GM12878 (cell line): ENCODE measurements at regions of chr2 and their contacts with region 1.

Region 1: GRCh38 chr2:233976690-233977294 is 59.6 kb downstream of the TRPM8 start:
- DNase-seq: peak; percentile 9
- ATAC-seq: peak; percentile 79
- H3K4me3 ChIP-seq: no peak overlapping the region
- H3K27ac ChIP-seq: no peak overlapping the region
- H3K4me1 ChIP-seq: no peaks in the 10 kb centered on the region
- H3K27me3 ChIP-seq: no peaks in the 10 kb centered on the region; a peak in 1 of 4 replicates
- CTCF ChIP-seq: peak; percentile 37 to 58 (median 37); a peak in 5 of 6 replicates
- EP300 ChIP-seq: no peak
- POLR2A ChIP-seq: no peak
- RAD21 ChIP-seq: peak; percentile 58

Region 2: DNA sequence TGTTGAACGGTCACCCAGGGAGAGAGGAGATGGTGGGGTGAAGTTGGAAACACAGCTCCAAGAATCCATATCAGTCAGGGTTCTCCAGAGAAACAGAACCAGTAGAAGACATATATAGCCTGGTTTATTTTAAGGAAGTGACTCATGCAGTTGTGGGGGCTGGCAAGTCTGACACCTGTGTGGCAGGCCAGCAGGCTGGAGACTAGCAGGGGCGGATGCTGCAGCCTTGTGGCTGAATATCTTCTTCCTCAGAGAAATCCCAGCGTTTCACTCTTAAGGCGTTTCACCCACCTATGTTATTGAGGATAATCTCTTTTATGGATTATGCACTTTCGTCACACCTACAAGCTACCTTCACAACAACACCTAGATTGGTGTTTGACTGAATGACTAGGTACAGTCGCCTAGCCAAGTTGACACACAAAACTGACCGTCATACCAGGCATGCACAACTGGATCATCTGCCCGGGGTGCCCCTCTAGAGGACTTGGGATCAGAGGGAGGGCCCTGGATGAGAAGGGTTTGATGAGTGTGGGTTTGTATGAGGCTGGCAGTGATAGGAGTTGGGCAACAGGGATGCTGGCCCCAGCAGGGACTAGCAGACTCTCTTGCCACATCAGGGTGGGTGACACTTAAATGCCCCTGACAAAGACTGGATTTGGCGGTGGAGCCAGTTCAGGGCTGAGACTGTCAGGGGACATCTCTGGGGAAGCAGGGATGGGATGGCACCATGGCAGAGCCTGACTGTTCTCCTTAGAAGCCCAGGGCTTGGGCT is 175.2 kb before region 1 on chr2:
- CTCF ChIA-PET with region 1: no interaction called
- POLR2A ChIA-PET with region 1: no interaction called
- RAD21 ChIA-PET with region 1: no interaction called
- SMC1A ChIA-PET with region 1: no interaction called
- in situ Hi-C with region 1: no loop called
- intact Hi-C with region 1: no loop called
- DNase-seq: no peak
- ATAC-seq: peak; percentile 50; the same call in 1 of the 3 replicates
- H3K4me3 ChIP-seq: no peak overlapping the region
- H3K27ac ChIP-seq: no peak overlapping the region
- H3K4me1 ChIP-seq: no peaks in the 10 kb centered on the region
- H3K27me3 ChIP-seq: no peaks in the 10 kb centered on the region; a peak in 1 of 4 replicates
- CTCF ChIP-seq: no peak
- EP300 ChIP-seq: no peak
- POLR2A ChIP-seq: no peak
- RAD21 ChIP-seq: no peak

Region 3: DNA sequence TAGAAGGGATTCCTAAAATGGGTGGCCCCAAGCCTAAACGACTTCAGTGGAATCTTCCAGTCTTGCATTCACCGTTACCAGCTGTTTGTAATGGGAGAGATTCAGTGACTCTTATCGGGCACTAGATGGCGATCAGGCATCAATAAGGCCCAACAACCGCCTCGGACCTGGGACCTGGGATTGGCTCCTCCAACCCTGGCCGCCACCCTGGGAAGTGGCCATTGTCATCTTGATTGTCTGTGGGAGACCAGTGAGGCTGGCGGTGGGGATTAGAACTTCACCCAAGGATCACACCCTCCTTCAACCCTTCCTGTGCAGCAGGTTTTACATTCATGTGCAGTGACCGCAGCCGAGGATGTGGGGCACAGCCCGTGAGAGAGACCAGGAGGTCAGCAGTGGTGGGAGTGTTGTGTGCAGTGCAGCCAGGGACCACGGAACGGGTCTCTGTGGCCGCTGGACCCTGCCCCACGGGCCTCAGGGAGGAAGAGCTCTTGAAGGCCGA is 159.0 kb after region 1 on chr2:
- CTCF ChIA-PET with region 1: no interaction called
- POLR2A ChIA-PET with region 1: no interaction called
- RAD21 ChIA-PET with region 1: interaction called, 3 read pairs
- SMC1A ChIA-PET with region 1: no interaction called
- in situ Hi-C with region 1: no loop called
- intact Hi-C with region 1: loop called (anchors 1 kb)
- DNase-seq: peak; percentile 5
- ATAC-seq: peak; percentile 88
- H3K4me3 ChIP-seq: no peak overlapping the region
- H3K27ac ChIP-seq: no peak overlapping the region
- H3K4me1 ChIP-seq: no peaks in the 10 kb centered on the region
- H3K27me3 ChIP-seq: no peaks in the 10 kb centered on the region; a peak in 3 of 4 replicates
- CTCF ChIP-seq: peak; percentile 62 to 79 (median 68)
- EP300 ChIP-seq: no peak
- POLR2A ChIP-seq: no peak
- RAD21 ChIP-seq: peak; percentile 70

Region 4: GRCh38 chr2:234218266-234219180 is 241.7 kb after region 1 on chr2:
- CTCF ChIA-PET with region 1: no interaction called
- POLR2A ChIA-PET with region 1: no interaction called
- RAD21 ChIA-PET with region 1: no interaction called
- SMC1A ChIA-PET with region 1: no interaction called
- in situ Hi-C with region 1: no loop called
- intact Hi-C with region 1: no loop called
- DNase-seq: no peak
- ATAC-seq: no peak
- H3K4me3 ChIP-seq: no peak overlapping the region
- H3K27ac ChIP-seq: no peak overlapping the region
- H3K4me1 ChIP-seq: no peaks in the 10 kb centered on the region
- H3K27me3 ChIP-seq: peaks cover 0 to 2% of the 10 kb centered on the region in 2 experiments; a peak in 1 of 4 replicates
- CTCF ChIP-seq: no peak
- EP300 ChIP-seq: no peak
- POLR2A ChIP-seq: no peak
- RAD21 ChIP-seq: no peak

Region 5: GRCh38 chr2:234444890-234445289 is 468.1 kb after region 1 on chr2:
- CTCF ChIA-PET with region 1: no interaction called
- POLR2A ChIA-PET with region 1: no interaction called
- RAD21 ChIA-PET with region 1: no interaction called
- SMC1A ChIA-PET with region 1: no interaction called
- in situ Hi-C with region 1: no loop called
- intact Hi-C with region 1: no loop called
- DNase-seq: no peak
- ATAC-seq: peak; percentile 61
- H3K4me3 ChIP-seq: no peak overlapping the region
- H3K27ac ChIP-seq: no peak overlapping the region; the same call in 1 of the 2 replicates
- H3K4me1 ChIP-seq: peaks cover 14% of the 10 kb centered on the region
- H3K27me3 ChIP-seq: no peaks in the 10 kb centered on the region
- CTCF ChIP-seq: no peak
- EP300 ChIP-seq: no peak
- POLR2A ChIP-seq: no peak
- RAD21 ChIP-seq: no peak